ENCODE measurements at regions of chr10 and their contacts with region 1.

Region 1: DNA sequence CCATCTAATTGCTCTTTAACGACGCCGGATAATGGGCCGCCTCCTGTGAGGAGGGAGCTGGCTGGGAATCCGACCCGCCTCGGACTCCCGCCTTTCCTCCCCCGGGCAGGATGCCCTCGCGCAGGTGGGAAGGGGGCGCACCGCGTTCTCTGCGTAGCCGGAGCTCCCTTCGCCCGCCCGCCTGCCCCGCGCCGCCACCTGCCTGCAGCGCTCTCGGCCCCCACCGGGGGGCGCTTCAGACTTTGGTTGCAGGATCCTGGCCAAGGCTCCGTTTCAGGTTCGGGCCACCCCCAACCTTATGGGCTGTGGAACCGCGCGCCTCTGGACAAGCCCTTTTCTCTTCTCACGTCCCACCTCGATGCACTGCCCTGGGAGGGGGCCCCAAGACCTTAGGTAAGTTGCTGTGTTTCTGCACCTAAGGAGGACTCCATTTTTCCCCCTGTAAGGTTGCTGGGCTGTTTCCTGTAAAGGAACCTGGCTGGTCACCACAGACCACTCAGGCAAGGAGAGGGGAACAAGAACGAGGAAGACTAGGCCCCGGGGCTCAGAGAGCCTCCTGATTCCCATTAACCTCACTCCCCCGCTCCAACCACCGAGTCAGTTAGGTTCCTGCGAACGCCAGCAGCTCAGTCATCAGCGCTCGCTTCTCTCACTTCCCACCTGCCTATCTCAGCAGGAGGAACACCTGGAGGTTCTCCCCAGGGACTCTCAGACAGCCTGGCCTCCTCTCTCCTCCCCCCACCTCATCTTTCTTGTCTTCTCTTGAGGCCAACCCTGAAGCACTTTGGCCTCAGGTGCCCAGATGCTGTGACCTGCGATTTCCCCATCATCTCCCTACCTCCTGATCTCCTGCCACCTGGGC is 11.3 kb upstream of the KAZALD1 start:
- DNase-seq: peak; percentile 70
- H3K27ac ChIP-seq: no peak overlapping the region
- CTCF ChIP-seq: peak; percentile 92

Region 2: DNA sequence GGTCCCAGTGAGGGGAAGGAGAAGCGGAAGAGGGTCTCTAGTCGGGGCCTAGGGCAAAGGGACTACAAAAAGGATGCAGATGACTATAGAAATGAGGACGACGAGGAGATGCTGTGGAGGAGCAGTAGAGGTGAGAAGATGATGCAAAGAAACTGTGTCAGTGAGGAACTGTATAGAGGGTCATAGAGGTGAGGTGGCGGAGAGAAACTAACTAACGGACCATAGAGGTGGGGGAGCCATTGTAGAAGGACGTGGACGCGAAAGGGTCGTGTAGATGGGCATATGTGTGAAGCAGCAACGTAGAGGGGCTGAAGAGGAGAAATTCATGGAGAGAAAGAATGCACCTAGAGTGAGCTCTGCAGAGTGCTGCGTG is 62.7 kb before region 1 on chr10:
- CTCF ChIA-PET with region 1: no interaction called
- POLR2A ChIA-PET with region 1: no interaction called
- DNase-seq: no peak
- H3K27ac ChIP-seq: peak overlapping the region; percentile 88
- CTCF ChIP-seq: no peak

Region 3: DNA sequence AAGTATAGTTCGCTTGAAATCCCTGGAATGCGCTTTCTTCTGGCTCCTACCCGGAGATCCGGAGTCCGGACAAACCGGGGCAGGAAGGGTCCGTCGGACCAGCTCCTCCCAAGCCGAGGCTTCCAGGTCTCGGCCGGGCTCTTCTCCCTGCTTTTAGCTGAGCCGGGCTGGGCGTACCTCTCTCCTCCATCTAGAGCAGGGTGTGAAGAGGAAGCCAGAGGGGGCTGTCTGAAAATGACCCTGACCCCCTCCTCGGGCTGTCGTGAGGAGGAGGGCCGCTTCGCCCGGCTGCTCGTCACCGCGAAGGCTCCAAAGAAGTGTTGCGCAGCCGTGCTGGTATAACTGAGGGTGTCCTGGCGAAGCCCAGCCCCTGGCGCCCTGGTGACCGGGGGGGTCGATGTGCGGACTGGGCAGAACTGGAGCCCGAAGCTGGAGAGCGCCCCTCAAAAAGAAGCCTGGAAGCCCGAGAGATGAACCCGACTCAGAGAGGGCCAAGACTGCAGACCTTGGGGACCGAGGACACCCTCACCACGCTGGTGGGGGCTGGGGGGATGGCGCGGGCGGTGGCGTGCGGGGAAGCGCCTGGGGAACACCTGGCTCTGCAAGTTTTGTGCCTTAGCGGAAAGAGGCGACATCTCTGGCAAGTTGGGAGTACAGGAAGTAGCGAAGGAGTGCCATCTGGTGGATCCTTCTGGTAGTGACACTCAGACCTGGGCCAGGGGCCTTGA is 17.1 kb after region 1 on chr10:
- CTCF ChIA-PET with region 1: interaction called, 23 read pairs
- POLR2A ChIA-PET with region 1: no interaction called
- DNase-seq: peak; percentile 74
- H3K27ac ChIP-seq: peak overlapping the region; percentile 94
- CTCF ChIP-seq: peak; percentile 87

Region 4: DNA sequence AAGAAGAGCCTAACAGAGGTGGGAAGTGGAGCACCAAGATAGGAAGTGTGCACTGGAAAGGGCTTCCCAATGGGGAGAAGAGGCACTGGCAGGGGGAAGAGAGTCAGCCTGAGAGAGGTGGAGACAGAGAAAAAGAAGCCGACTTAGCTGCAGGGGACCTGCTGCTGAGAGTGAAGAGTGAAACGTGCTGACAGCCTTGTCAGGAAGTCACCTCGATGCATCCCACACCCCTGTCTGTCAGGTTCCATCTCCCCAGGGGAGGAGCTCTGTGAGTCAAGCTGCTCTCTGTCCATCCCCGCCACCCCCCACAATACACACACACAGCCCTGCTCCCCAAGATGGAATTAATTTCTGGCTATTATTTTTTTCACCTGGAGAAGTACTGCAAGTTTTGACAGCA is 25.3 kb after region 1 on chr10:
- CTCF ChIA-PET with region 1: interaction called, 10 read pairs
- POLR2A ChIA-PET with region 1: no interaction called
- DNase-seq: no peak
- H3K27ac ChIP-seq: no peak overlapping the region
- CTCF ChIP-seq: no peak

Region 5: DNA sequence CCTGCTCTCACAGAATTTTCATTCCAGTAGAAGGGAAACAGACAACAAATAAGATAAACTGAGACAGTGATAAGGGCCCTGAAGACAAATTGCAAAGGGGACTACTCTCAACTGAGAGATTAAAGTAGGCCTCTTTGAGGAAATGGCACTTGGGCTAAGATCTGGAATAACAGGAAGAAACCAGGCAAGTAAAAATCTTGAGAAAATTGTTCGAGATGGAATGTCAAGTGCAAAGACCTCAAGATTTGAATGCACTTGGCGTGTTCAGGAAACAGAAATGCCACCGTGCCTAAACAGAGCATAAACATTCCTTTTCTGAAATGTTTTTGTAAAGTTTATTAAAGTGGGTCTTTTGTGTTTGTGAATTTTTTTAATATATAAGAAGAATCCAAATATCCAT is 994.9 kb after region 1 on chr10:
- CTCF ChIA-PET with region 1: no interaction called
- POLR2A ChIA-PET with region 1: no interaction called
- DNase-seq: no peak
- H3K27ac ChIP-seq: no peak overlapping the region
- CTCF ChIP-seq: no peak

Measured in RWPE1 (cell line).